T-cell (primary cell): ENCODE measurements at regions of chr5 and their contacts with region 1.

Region 1: GRCh38 chr5:157718519-157718918 is 12.7 kb upstream of the THG1L start:
- DNase-seq: peak in 3 of 35 experiments; percentile 2 to 63 (median 11)
- ATAC-seq: peak; percentile 70 to 79 (median 76)
- H3K4me3 ChIP-seq: no peak overlapping the region
- H3K4me3 Mint-ChIP-seq: peak overlapping the region in 1 of 3 donors; percentile 38
- H3K27ac ChIP-seq: no peak overlapping the region
- H3K27ac Mint-ChIP-seq: peak overlapping the region; percentile 27 to 45
- H3K4me1 ChIP-seq: peaks cover 14 to 15% of the 10 kb centered on the region in 2 experiments
- H3K4me1 Mint-ChIP-seq: peaks cover 17 to 22% (median 20%) of the 10 kb centered on the region in 3 donors
- H3K27me3 ChIP-seq: no peaks in the 10 kb centered on the region
- H3K27me3 Mint-ChIP-seq: no peaks in the 10 kb centered on the region

Region 2: DNA sequence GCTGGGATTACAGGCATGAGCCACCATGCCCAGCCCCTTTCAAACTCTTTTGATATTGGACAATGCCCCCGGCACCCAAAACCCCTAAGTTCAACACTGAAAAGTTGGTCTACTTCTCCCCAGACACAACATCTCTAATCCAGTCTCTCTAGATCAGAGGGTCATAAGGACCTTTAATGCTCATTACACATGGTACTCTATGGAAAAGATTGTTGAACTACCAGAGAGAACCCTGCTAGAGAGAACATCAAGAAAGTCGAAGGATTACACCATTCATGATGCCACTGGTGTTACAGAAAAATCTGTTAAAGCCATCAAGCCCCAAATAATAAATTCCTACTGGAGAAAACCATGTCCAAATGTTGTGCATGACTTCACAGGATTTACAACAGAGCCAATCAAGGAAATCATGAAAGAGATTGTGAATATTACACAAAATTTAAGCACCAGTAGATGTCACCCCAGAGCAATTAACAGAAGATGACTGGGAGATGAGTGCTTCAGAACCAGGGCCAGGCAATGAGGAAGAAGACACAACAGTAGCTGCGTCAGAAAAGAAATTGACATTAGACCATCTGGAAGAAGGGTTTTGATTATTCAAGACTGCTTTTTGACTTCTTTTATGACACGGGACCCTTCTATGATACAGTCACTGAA is 286.8 kb before region 1 on chr5:
- CTCF ChIA-PET with region 1: interaction called, 13 to 16 read pairs
- POLR2A ChIA-PET with region 1: no interaction called
- DNase-seq: peak in 14 of 35 experiments; percentile 1 to 68 (median 10)
- ATAC-seq: peak; percentile 76 to 88 (median 83)
- H3K4me3 ChIP-seq: no peak overlapping the region
- H3K4me3 Mint-ChIP-seq: no peak overlapping the region
- H3K27ac ChIP-seq: no peak overlapping the region
- H3K27ac Mint-ChIP-seq: peak overlapping the region in 1 of 2 donors; percentile 47
- H3K4me1 ChIP-seq: no peaks in the 10 kb centered on the region
- H3K4me1 Mint-ChIP-seq: peaks cover 0 to 7% (median 6%) of the 10 kb centered on the region in 3 donors
- H3K27me3 ChIP-seq: peaks cover 0 to 3% of the 10 kb centered on the region in 2 experiments
- H3K27me3 Mint-ChIP-seq: peaks cover 1 to 7% of the 10 kb centered on the region in 2 donors